ENCODE measurements at regions of chr4 and their contacts with region 1.

Region 1: DNA sequence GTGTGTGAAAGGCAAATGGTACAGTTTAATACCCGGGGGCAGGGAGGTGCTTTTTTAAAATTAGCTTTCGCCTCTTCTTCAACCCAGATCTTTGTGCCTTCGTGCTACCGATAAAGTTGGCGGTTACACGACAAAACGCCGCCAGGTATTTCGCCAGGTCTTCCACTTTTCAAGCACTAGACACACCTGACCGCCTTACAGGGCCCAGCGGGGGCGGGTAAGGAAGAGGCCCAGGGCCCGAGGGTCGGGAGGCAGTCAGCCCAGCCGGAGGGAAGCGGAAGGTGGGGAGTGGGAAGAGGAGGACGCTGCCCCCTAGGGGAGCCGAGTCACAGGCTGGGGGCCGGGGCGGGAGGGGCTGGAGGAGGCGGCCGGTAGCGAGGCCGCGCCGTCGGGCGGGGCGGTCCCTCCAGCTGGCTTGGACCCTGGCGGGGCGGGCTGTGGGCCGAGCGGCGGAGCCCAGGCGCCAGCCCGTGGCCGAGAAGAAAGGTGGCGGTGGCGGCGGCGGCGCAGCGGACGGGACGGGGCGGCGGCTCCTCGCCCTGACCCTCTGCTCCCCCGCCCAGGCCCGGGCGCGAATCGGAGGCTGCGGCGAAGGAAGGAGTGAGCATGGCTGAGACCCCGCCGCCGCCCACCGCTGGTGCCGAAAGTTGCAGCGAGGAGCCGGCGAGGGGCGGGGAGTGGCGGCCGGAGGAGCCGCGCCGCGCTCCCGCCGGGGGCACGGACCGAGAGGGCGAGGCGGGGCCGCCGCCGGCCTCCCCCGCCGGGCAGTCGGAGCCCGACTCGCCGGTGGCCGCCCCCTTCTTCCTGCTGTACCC is 16.2 kb downstream of the UTP3 start:
- DNase-seq: peak; percentile 57 to 81
- ATAC-seq: peak; percentile 61 to 73 (median 63)
- H3K4me3 ChIP-seq: peak overlapping the region; percentile 67
- H3K4me3 Mint-ChIP-seq: peak overlapping the region; percentile 87
- H3K27ac ChIP-seq: peak overlapping the region; percentile 85
- H3K27ac Mint-ChIP-seq: peak overlapping the region; percentile 71 to 92
- H3K4me1 ChIP-seq: peaks cover 15% of the 10 kb centered on the region
- H3K4me1 Mint-ChIP-seq: peaks cover 23 to 24% of the 10 kb centered on the region in 2 donors
- H3K27me3 ChIP-seq: no peaks in the 10 kb centered on the region
- H3K27me3 Mint-ChIP-seq: no peaks in the 10 kb centered on the region
- CTCF ChIP-seq: no peak

Region 2: DNA sequence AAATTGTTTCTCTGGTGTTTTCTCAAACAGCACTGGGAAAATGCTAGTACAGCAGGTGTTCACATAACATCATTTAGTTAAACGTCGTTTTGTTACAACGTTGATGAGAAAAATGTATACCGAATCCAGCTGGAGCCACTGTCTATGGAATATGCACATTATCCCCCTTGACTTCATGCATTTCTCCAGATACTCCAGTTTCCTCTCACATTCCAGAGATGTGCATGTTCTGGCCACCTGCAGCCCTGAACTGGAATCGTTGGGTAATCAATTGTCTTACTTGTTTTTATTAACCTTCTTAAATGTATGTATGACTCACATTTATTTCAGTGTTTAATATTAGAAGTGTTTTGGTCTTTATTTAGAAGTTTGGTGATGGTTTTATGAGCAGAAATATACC is 527.4 kb before region 1 on chr4:
- intact Hi-C with region 1: no loop called
- DNase-seq: no peak
- ATAC-seq: no peak
- H3K4me3 ChIP-seq: no peak overlapping the region
- H3K4me3 Mint-ChIP-seq: no peak overlapping the region
- H3K27ac ChIP-seq: no peak overlapping the region
- H3K27ac Mint-ChIP-seq: no peak overlapping the region
- H3K4me1 ChIP-seq: no peaks in the 10 kb centered on the region
- H3K4me1 Mint-ChIP-seq: no peaks in the 10 kb centered on the region
- H3K27me3 ChIP-seq: no peaks in the 10 kb centered on the region
- H3K27me3 Mint-ChIP-seq: no peaks in the 10 kb centered on the region
- CTCF ChIP-seq: no peak

Region 3: GRCh38 chr4:70337886-70338420 is 366.6 kb before region 1 on chr4:
- intact Hi-C with region 1: no loop called
- DNase-seq: no peak
- ATAC-seq: no peak
- H3K4me3 ChIP-seq: no peak overlapping the region
- H3K4me3 Mint-ChIP-seq: no peak overlapping the region
- H3K27ac ChIP-seq: no peak overlapping the region
- H3K27ac Mint-ChIP-seq: no peak overlapping the region
- H3K4me1 ChIP-seq: no peaks in the 10 kb centered on the region
- H3K4me1 Mint-ChIP-seq: no peaks in the 10 kb centered on the region
- H3K27me3 ChIP-seq: no peaks in the 10 kb centered on the region
- H3K27me3 Mint-ChIP-seq: no peaks in the 10 kb centered on the region
- CTCF ChIP-seq: no peak

Region 4: DNA sequence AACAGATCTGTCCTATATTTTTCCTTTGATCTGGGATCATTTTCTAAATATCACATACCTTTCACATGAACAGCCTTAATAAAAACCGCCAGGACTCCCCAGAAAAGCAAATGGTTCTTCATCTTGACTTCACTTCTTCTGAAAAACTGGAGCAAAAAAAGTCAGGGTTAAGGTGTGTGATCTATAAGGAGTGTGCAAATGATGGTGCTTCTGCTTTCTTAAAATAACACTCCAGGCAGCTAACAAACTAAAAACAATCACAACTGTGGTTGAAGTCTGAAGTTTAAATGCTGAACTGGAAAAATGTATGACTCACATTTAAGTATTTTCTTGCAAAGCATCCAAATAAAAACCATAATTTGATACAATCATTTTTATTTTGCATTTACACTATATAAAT is 38.2 kb before region 1 on chr4 and contains the start of gene JCHAIN:
- intact Hi-C with region 1: no loop called
- DNase-seq: no peak
- ATAC-seq: no peak
- H3K4me3 ChIP-seq: peak within 1 kb of the TSS; percentile 16
- H3K4me3 Mint-ChIP-seq: no peak within 1 kb of the TSS
- H3K27ac ChIP-seq: no peak within 1 kb of the TSS
- H3K27ac Mint-ChIP-seq: no peak within 1 kb of the TSS
- H3K4me1 ChIP-seq: no peaks in the 10 kb centered on the region
- H3K4me1 Mint-ChIP-seq: no peaks in the 10 kb centered on the region
- H3K27me3 ChIP-seq: no peaks in the 10 kb centered on the region
- H3K27me3 Mint-ChIP-seq: peaks cover 6 to 16% of the 10 kb centered on the region in 2 donors
- CTCF ChIP-seq: no peak
- total RNA-seq, gene JCHAIN: 1.6 to 1,035 (median 3.5) TPM

Region 5: DNA sequence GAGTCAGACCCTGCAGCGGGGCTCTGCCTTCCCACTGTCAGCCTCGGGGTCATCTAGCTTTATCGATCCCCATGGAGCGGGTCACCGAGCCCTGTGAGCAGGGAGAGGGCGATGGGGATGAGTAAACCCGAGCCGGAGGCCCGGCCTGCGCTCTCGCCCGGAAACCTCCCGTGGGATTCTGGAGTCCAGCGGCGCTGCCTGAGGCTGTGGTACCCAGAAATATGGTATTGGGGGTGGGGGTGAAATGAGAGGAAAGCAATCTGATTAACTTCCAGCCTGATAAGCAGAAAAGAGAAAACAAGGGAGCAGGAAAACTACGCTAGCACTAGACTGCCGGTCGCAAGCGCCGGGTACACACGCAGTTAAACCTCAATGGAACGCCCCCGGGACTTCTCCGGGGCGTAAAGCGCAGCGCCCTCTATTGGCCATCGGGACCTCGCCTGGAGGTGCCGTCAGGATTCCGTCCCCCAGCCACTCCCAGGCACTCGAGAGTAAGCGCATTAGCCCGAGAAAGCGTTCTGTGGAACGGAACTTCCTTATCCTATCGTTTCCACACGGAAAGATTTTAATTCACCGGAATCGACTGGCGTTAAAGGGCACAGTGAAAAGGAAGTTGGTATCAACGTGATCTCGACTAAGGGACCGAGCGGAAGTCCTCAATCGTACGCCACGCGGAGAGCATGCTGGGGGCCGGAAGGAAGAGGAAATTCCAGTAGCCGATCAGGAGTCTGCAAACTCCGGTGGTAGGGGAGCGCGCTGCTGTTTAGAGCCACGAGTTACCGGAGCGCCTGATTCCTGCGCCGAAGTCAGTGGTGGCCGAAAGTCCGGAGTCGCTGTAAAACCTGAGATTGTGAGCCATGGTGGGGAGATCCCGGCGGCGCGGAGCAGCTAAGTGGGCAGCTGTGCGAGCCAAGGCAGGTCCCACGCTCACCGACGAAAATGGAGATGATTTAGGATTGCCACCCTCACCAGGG is 16.4 kb before region 1 on chr4 and contains the start of gene UTP3:
- intact Hi-C with region 1: loop called (anchors 1 kb)
- DNase-seq: peak; percentile 85 to 98
- ATAC-seq: peak; percentile 85 to 96 (median 89)
- H3K4me3 ChIP-seq: peak within 1 kb of the TSS; percentile 93
- H3K4me3 Mint-ChIP-seq: peak within 1 kb of the TSS; percentile 100
- H3K27ac ChIP-seq: peak within 1 kb of the TSS; percentile 97
- H3K27ac Mint-ChIP-seq: peak within 1 kb of the TSS; percentile 99
- H3K4me1 ChIP-seq: peaks cover 25% of the 10 kb centered on the region
- H3K4me1 Mint-ChIP-seq: peaks cover 33 to 36% of the 10 kb centered on the region in 2 donors
- H3K27me3 ChIP-seq: no peaks in the 10 kb centered on the region
- H3K27me3 Mint-ChIP-seq: peaks cover 0 to 2% of the 10 kb centered on the region in 2 donors
- CTCF ChIP-seq: peak; percentile 97
- total RNA-seq, gene UTP3: 22.3 to 23.1 (median 22.6) TPM

Region 6: DNA sequence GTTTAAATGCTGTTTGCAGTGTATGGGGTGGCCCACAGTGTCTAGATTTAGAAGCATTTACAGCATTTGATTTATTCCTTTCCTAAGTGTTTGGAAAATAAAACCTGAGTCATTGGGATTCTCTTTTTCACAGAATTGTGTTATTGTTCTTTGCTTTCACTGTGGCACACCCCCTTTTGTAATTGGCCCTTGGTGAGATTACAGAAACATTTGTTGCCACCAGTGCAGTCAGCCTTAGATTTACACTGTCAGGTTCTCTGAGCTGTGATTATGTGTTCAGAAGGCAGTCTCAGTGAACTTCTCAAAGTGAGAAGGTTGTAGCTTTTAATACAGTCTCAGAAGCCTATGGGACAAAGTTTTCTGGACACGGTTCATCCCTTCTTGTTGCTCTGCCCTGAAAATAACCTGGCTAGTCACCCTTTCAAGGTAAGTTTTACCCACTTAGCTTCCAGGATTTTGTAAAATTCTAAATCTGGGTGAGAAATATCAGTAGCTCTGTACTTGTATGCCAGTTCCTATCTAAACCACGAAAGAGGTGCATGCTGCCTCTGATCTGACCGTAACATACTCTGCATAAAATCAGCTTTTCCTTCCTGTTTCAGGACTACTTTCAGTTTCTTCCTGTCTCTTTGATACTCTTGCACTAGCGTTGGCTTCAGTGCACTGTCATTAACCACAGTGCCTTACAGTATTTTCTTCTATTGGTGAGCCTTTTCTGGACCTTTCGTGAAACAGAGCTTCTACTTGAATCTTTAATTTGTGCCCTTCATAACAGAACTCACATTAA is 29.8 kb after region 1 on chr4:
- intact Hi-C with region 1: loop called (anchors 1 kb)
- DNase-seq: peak in 1 of 2 donors; percentile 79
- ATAC-seq: peak; percentile 91 to 95 (median 94)
- H3K4me3 ChIP-seq: peak overlapping the region; percentile 39
- H3K4me3 Mint-ChIP-seq: peak overlapping the region; percentile 83
- H3K27ac ChIP-seq: peak overlapping the region; percentile 91
- H3K27ac Mint-ChIP-seq: peak overlapping the region; percentile 84 to 89
- H3K4me1 ChIP-seq: peaks cover 21% of the 10 kb centered on the region
- H3K4me1 Mint-ChIP-seq: peaks cover 38 to 43% of the 10 kb centered on the region in 2 donors
- H3K27me3 ChIP-seq: no peaks in the 10 kb centered on the region
- H3K27me3 Mint-ChIP-seq: no peaks in the 10 kb centered on the region
- CTCF ChIP-seq: no peak

Region 7: GRCh38 chr4:70749313-70749712 is 44.8 kb after region 1 on chr4:
- intact Hi-C with region 1: no loop called
- DNase-seq: no peak
- ATAC-seq: no peak
- H3K4me3 ChIP-seq: no peak overlapping the region
- H3K4me3 Mint-ChIP-seq: no peak overlapping the region
- H3K27ac ChIP-seq: no peak overlapping the region
- H3K27ac Mint-ChIP-seq: no peak overlapping the region
- H3K4me1 ChIP-seq: no peaks in the 10 kb centered on the region
- H3K4me1 Mint-ChIP-seq: peaks cover 0 to 5% of the 10 kb centered on the region in 2 donors
- H3K27me3 ChIP-seq: no peaks in the 10 kb centered on the region
- H3K27me3 Mint-ChIP-seq: no peaks in the 10 kb centered on the region
- CTCF ChIP-seq: no peak

Region 8: DNA sequence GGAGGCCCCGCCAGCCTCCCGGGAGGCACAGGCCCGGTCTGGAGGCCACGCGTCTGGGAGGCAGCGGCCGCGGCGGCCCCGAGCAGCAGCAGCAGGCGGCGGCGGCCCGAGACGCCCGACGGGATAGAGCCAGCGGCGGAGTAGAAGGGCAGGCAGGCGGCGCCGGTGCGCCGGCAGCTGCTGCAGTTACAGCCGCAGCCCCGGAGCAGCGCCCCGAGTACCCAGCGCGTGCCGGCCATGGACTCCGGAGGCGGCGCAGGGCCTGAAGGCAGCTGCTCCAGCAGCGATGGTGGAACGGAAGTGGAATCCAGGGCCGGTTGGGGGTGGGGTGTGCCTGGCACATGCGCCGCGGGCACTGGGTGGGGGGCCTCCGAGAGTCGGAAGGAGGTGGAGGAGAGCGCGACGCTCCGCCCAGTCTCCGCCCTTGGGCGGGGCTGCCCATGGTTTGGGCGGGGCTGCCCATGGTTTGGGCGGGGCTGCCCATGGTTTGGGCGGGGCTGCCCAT is 135.1 kb after region 1 on chr4 and contains the start of gene GRSF1:
- intact Hi-C with region 1: loop called (anchors 5 kb)
- DNase-seq: peak; percentile 89 to 97
- ATAC-seq: peak; percentile 88 to 97 (median 88)
- H3K4me3 ChIP-seq: peak within 1 kb of the TSS; percentile 46
- H3K4me3 Mint-ChIP-seq: peak within 1 kb of the TSS; percentile 98
- H3K27ac ChIP-seq: peak within 1 kb of the TSS; percentile 80
- H3K27ac Mint-ChIP-seq: peak within 1 kb of the TSS; percentile 95 to 97
- H3K4me1 ChIP-seq: peaks cover 23% of the 10 kb centered on the region
- H3K4me1 Mint-ChIP-seq: peaks cover 20 to 27% of the 10 kb centered on the region in 2 donors
- H3K27me3 ChIP-seq: no peaks in the 10 kb centered on the region
- H3K27me3 Mint-ChIP-seq: no peaks in the 10 kb centered on the region
- CTCF ChIP-seq: no peak
- total RNA-seq, gene GRSF1: 33.4 to 50.8 (median 43.0) TPM

Measured in natural killer cell (primary cell).